ENCODE measurements at regions of chr13 and their contacts with region 1.

Region 1: DNA sequence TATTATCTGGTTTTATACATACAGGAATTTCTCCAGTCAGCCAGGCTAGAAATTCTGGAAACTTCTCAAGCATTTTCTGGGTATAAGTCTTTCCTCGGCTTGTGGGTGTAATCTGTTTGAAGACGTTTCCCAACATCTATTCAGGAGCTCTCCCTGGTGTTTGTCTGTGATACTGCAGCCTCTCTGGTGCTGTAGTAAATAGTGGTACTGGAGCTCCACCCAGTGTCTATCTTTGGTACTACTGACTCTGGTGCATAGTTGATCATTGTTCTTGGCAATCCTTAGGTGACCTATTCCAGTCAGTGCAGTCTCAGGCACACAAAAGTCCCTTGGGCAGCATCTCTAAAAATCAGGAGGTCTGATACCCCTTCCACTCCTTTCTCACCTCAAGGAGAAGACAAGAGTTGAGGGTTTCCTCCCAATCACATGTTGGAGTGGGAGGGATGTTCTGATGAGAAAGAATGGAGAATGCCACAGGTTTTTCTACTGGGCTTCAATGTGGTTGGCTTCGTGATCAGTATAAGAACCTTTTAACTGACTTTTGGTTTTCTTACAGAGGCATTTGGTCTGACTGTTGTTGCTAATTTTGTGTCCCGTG is 115.5 kb downstream of the CYSLTR2 start:
- H3K4me3 ChIP-seq: no peak overlapping the region
- H3K27ac ChIP-seq: no peak overlapping the region
- H3K4me1 ChIP-seq: no peaks in the 10 kb centered on the region
- CTCF ChIP-seq: peak; percentile 86

Region 2: GRCh38 chr13:48590141-48590863 is 178.9 kb before region 1 on chr13:
- CTCF ChIA-PET with region 1: interaction called, 80 read pairs
- POLR2A ChIA-PET with region 1: no interaction called
- H3K4me3 ChIP-seq: no peak overlapping the region
- H3K27ac ChIP-seq: no peak overlapping the region
- H3K4me1 ChIP-seq: no peaks in the 10 kb centered on the region
- CTCF ChIP-seq: no peak

Region 3: DNA sequence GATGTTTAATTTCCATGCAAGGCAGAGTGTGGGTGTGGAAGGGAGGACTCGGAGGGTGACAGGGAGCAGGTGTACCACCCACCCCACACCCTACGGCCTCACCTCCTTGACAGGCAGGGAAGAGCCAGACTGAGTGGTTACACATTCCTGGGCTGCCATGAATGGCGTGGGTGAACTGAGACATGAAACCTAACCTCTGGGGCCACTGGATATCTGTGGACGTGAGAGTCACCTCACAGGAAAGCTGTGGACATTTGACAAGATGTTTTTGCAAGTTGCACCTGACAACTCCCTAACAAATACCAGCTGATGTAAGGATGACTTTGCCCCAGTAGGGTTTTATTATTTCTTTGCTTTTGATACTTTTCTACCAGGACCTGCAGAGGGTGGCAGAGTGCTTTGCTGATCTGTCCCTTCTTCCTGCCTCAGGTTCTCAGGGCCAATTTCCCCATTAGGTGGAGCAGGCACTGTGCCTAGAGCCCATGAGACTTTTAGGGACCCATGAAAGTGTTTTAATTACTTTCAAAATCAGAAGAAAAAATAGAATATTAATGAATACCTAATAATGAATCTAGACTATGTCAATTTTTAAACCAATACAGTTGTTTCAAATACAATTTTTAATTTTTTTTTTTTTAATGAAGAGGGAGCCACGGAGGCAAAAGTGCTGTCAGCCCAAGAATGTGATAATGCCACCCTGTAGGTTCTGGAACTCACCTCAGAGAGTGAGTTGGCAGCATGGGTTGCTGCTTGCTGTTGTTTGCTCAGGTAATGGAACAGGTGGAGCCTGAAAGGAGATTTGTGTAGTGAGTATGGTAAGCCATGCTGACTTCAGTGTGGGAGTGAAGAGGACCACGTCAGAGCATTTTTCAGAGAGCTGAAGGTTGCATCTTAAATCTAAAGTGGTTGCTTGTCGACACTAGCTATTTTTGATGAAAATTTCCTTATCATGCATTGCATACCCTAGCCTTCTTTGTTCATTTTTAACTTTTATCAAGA is 173.5 kb before region 1 on chr13:
- CTCF ChIA-PET with region 1: interaction called, 80 read pairs
- POLR2A ChIA-PET with region 1: no interaction called
- H3K4me3 ChIP-seq: no peak overlapping the region
- H3K27ac ChIP-seq: no peak overlapping the region
- H3K4me1 ChIP-seq: no peaks in the 10 kb centered on the region
- CTCF ChIP-seq: peak; percentile 72

Region 4: GRCh38 chr13:48749699-48750473 is 19.3 kb before region 1 on chr13:
- CTCF ChIA-PET with region 1: interaction called, 20 read pairs
- POLR2A ChIA-PET with region 1: no interaction called
- H3K4me3 ChIP-seq: no peak overlapping the region
- H3K27ac ChIP-seq: no peak overlapping the region
- H3K4me1 ChIP-seq: no peaks in the 10 kb centered on the region; the same call in 1 of the 2 replicates
- CTCF ChIP-seq: no peak

Measured in HEK293 (cell line).